HepG2 (cell line): ENCODE measurements at regions of chr7 and their contacts with region 1.

Region 1: DNA sequence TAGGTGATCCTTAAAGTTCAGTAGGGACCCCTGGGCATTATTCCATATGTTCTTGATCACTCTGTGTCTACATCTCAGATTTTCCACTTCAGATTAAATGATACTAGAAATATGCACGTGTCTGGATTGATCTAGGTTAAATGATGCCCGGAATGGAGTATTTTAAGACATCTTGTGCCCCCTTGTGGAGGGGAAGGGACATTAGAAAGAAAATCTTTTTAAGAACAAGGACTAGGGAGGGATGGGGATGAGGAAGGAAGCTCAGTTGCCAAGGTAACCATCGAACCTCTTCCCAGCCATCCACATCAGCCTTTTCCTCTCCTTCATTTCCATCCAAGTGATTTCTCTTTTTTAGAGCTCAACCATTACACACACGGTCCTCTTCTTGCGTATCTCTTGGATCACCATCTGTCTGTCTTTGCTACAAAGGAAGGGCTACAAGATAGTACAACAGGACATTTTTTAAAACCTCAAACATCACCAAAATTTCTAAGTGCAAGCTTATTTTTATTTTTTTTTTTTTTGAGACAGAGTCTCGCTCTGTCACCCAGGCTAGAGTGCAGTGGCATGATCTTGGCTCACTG is 40.5 kb downstream of the PRSS2 start:
- DNase-seq: peak; percentile 28
- ATAC-seq: peak; percentile 62
- H3K4me3 ChIP-seq: no peak overlapping the region
- H3K27ac ChIP-seq: no peak overlapping the region
- H3K4me1 ChIP-seq: no peaks in the 10 kb centered on the region
- H3K27me3 ChIP-seq: no peaks in the 10 kb centered on the region
- CTCF ChIP-seq: peak; percentile 49; the same call in 1 of the 2 replicates
- EP300 ChIP-seq: no peak
- POLR2A ChIP-seq: no peak
- RAD21 ChIP-seq: no peak

Region 2: DNA sequence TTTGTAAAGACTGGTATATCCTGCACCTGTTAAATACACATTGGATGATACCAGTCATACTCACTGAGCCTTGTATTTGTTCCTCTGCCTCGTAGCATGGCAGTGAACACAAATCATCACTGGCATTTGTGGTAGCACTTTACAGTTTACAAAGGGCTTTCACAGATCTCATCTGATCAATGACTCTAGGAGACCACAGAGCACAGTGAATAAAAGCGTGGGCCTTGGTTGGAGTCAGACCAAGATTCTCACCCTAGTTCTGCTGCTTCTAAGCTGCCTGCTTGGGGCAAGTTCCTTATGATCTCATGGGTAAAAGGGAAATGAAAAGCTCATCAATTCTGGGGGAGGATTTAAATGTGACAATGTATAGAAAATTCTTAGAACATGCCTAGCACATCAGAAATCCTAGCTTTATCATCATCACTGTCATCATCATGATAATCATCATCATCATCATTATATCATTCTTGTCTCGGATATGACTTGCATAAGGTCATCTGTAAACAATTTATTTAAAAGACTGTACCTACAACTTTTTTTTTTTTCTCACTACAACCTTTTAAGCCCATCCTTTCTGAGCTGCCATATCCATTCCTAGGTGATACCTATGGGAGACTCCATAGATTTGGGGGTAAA is 1389.8 kb before region 1 on chr7:
- CTCF ChIA-PET with region 1: no interaction called
- POLR2A ChIA-PET with region 1: no interaction called
- in situ Hi-C with region 1: no loop called
- intact Hi-C with region 1: loop called (anchors 5 kb)
- DNase-seq: no peak
- ATAC-seq: no peak
- H3K4me3 ChIP-seq: no peak overlapping the region
- H3K27ac ChIP-seq: no peak overlapping the region
- H3K4me1 ChIP-seq: no peaks in the 10 kb centered on the region
- H3K27me3 ChIP-seq: no peaks in the 10 kb centered on the region; a peak in 1 of 5 replicates
- CTCF ChIP-seq: no peak
- EP300 ChIP-seq: no peak
- POLR2A ChIP-seq: no peak
- RAD21 ChIP-seq: no peak

Region 3: DNA sequence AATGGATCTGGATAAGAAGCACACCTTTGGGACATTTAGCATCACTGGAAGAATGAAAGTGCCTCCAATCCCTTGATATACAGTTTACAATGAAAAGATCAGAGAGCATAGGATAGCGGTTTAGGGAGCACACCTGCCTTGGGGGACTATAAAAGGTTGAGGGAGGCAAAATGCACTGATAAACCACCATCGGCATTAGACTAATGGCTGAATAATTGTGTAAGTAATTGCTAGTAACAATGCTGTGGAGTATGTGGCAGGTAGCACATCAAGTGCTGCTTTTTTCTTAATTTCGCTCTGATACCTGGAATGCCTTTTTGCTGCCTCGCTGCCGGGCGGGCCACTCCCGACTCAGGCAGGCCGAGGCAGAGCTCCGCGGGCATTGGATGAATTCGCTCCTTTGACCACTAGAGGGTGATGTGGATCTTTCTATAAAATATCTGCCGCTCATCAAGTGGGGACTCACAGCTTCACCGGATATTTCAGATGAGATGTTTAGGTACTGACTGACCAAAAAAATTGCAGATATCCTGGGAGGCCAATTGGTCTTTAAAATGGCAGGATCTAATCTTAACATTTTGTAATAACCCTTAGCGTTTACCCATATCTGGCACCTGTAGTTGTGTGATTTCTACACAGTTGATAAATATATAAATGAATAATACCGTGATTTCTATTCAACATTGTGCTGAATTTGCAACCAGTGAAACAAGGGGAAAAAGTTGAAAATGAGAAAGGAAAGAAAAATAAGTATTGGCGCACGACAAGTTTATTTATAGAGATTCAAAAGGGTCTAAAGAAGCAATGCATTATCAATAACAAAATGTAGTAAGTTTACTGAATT is 178.7 kb before region 1 on chr7:
- CTCF ChIA-PET with region 1: no interaction called
- POLR2A ChIA-PET with region 1: no interaction called
- in situ Hi-C with region 1: no loop called
- intact Hi-C with region 1: loop called (anchors 1 kb)
- DNase-seq: peak; percentile 32
- ATAC-seq: peak; percentile 96
- H3K4me3 ChIP-seq: no peak overlapping the region
- H3K27ac ChIP-seq: no peak overlapping the region
- H3K4me1 ChIP-seq: no peaks in the 10 kb centered on the region
- H3K27me3 ChIP-seq: peaks cover 0 to 22% of the 10 kb centered on the region in 2 experiments; a peak in 2 of 5 replicates
- CTCF ChIP-seq: peak; percentile 74
- EP300 ChIP-seq: no peak
- POLR2A ChIP-seq: no peak
- RAD21 ChIP-seq: peak; percentile 50; the same call in 1 of the 2 replicates